ENCODE measurements at regions of chr5 and their contacts with region 1.

Region 1: GRCh38 chr5:135560858-135561257 is 17.9 kb downstream of the CXCL14 start:
- DNase-seq: peak; percentile 63
- ATAC-seq: peak; percentile 98
- H3K4me3 ChIP-seq: no peak overlapping the region
- H3K27ac ChIP-seq: no peak overlapping the region
- H3K4me1 ChIP-seq: no peaks in the 10 kb centered on the region
- H3K27me3 ChIP-seq: 0 out of 5 replicates have a peak, but pooled peaks cover 0 to 1% of the 10 kb centered on the region in 2 experiments
- CTCF ChIP-seq: peak; percentile 94
- EP300 ChIP-seq: no peak
- POLR2A ChIP-seq: no peak
- RAD21 ChIP-seq: peak; percentile 65

Region 2: GRCh38 chr5:135729321-135729786 is 168.5 kb after region 1 on chr5:
- CTCF ChIA-PET with region 1: no interaction called
- POLR2A ChIA-PET with region 1: no interaction called
- in situ Hi-C with region 1: loop called (anchors 10 kb)
- intact Hi-C with region 1: no loop called
- DNase-seq: no peak
- ATAC-seq: no peak
- H3K4me3 ChIP-seq: no peak overlapping the region
- H3K27ac ChIP-seq: no peak overlapping the region
- H3K4me1 ChIP-seq: no peaks in the 10 kb centered on the region
- H3K27me3 ChIP-seq: no peaks in the 10 kb centered on the region
- CTCF ChIP-seq: no peak; the same call in 1 of the 2 replicates
- EP300 ChIP-seq: no peak
- POLR2A ChIP-seq: no peak
- RAD21 ChIP-seq: no peak

Region 3: DNA sequence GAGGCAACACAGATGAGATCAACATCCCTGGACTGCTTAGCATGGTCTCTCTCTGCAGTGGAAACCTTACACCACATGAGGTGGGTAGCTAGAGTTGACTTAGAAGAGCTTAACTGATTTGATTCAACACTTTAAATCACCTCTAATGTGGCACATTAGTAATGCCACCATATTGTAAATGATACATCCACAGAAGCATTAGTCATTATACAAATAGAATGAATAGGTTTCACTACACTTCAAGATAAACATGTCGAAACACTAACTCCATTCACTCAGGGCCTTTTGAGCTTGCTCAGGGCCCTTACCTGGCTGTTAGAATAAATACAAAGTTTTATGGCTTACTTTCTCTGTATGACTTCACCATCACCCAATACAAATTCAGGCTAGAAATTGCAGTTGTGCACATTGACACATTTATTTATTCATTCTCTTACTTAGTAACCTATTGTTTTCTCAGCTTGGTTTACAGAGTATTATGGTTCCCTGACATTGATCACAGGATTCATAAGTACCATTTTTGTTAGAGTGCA is 562.4 kb after region 1 on chr5:
- CTCF ChIA-PET with region 1: no interaction called
- POLR2A ChIA-PET with region 1: no interaction called
- in situ Hi-C with region 1: loop called (anchors 25 kb)
- intact Hi-C with region 1: no loop called
- DNase-seq: peak; percentile 94
- ATAC-seq: peak; percentile 86
- H3K4me3 ChIP-seq: peak overlapping the region in 1 of 3 experiments; percentile 19; a peak in 1 of 6 replicates
- H3K27ac ChIP-seq: peak overlapping the region; percentile 13
- H3K4me1 ChIP-seq: peaks cover 39% of the 10 kb centered on the region
- H3K27me3 ChIP-seq: no peaks in the 10 kb centered on the region
- CTCF ChIP-seq: no peak
- EP300 ChIP-seq: peak in 1 of 2 experiments; percentile 52; a peak in 2 of 4 replicates
- POLR2A ChIP-seq: no peak
- RAD21 ChIP-seq: no peak